ENCODE measurements at regions of chr5 and their contacts with region 1.

Region 1: GRCh38 chr5:25441810-25442209 is 797.0 kb upstream of the CDH10 start:
- DNase-seq: no peak
- H3K4me3 Mint-ChIP-seq: no peak overlapping the region
- H3K27ac Mint-ChIP-seq: no peak overlapping the region
- H3K4me1 Mint-ChIP-seq: no peaks in the 10 kb centered on the region
- H3K27me3 Mint-ChIP-seq: no peaks in the 10 kb centered on the region
- CTCF ChIP-seq: no peak

Region 2: DNA sequence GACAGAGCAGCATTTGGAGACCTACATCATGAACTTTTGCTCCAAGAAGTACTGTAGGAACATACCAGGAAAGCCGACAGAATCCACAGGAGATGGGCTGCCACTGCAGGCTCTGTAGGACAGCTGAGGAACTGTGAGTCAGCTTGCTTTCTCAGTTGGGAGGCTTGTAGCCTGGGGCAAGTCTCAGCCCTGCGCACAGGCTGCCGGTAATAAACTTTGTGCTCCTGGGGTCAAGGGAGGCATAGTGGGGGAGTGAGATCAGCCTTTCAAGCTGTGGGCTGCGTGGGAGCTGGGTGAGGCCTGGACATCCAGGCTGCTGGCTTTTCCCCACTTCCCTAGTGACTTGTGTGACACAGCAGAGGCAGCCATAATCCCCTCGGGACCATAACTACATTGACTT is 79.0 kb before region 1 on chr5:
- CTCF ChIA-PET with region 1: no interaction called
- POLR2A ChIA-PET with region 1: no interaction called
- intact Hi-C with region 1: no loop called
- DNase-seq: peak; percentile 47
- H3K4me3 Mint-ChIP-seq: no peak overlapping the region
- H3K27ac Mint-ChIP-seq: no peak overlapping the region
- H3K4me1 Mint-ChIP-seq: peaks cover 5% of the 10 kb centered on the region
- H3K27me3 Mint-ChIP-seq: no peaks in the 10 kb centered on the region
- CTCF ChIP-seq: no peak

Region 3: DNA sequence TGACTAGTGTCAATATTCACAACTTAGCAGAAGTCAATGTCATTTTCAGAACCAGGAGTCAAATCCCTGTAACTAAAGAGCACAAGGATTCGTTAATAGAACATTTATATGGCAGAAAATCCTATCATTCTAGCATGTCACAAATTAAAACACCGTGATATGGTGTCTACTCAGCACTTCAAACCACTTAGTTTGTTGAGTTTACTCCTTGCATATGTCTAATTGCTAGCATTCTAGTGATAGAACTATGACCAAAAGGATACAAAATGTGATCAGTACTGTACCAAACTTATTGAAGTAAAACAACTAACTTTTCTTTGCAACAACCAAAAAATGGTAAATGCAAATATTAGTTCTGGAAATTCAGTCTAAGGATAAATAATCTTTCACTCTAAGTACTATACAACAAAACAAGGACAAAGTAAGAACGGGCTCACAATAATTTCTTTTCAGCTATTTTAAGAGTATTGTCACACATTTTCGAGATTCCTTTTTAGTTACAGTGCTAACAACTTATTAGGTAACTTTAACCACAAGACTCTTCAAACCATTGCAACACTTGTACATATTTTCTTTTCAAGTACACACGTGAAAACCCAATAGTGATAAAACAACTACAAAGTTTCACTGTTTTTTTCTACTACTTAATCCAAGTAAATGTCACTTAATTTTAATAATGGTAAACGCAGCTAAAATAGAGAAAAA is 48.2 kb after region 1 on chr5:
- CTCF ChIA-PET with region 1: no interaction called
- POLR2A ChIA-PET with region 1: no interaction called
- intact Hi-C with region 1: loop called (anchors 2 kb)
- DNase-seq: peak; percentile 68
- H3K4me3 Mint-ChIP-seq: no peak overlapping the region
- H3K27ac Mint-ChIP-seq: peak overlapping the region; percentile 78
- H3K4me1 Mint-ChIP-seq: peaks cover 6% of the 10 kb centered on the region
- H3K27me3 Mint-ChIP-seq: no peaks in the 10 kb centered on the region
- CTCF ChIP-seq: no peak

Measured in MCF 10A (cell line).